Calu3 (cell line): ENCODE measurements at regions of chr6 and their contacts with region 1.

Region 1: GRCh38 chr6:166275714-166276166 is 32.5 kb downstream of the PRR18 start:
- DNase-seq: peak; percentile 89
- H3K4me3 Mint-ChIP-seq: no peak overlapping the region
- H3K27ac Mint-ChIP-seq: no peak overlapping the region
- H3K4me1 Mint-ChIP-seq: peaks cover 10% of the 10 kb centered on the region
- H3K27me3 Mint-ChIP-seq: peaks cover 38% of the 10 kb centered on the region
- CTCF ChIP-seq: peak; percentile 93

Region 2: DNA sequence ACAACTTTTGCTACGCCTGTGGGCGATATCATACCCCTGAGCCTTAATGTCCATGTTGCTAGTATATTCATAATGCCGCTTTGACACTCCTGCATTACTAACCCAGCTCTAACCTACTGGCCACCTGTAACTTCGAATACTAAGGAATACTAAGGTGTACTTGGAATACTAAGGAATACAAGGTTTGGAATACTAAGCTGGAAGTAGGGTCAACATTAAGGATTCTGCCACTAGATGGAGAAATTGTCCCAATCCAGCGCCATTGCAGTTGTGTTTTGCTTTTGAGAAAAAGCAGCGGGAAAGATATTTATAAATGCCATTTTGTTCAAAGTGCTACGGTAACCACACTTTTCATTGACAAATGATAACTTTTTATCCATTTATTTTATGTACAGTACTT is 118.8 kb before region 1 on chr6:
- CTCF ChIA-PET with region 1: interaction called, 8 read pairs
- intact Hi-C with region 1: loop called (anchors 2 kb)
- DNase-seq: no peak
- H3K4me3 Mint-ChIP-seq: no peak overlapping the region
- H3K27ac Mint-ChIP-seq: no peak overlapping the region
- H3K4me1 Mint-ChIP-seq: no peaks in the 10 kb centered on the region
- H3K27me3 Mint-ChIP-seq: peaks cover 32% of the 10 kb centered on the region
- CTCF ChIP-seq: no peak

Region 3: GRCh38 chr6:166382933-166383801 is 107.4 kb after region 1 on chr6 and contains the start of gene MPC1:
- CTCF ChIA-PET with region 1: interaction called, 6 read pairs
- intact Hi-C with region 1: loop called (anchors 5 kb)
- DNase-seq: peak; percentile 98
- H3K4me3 Mint-ChIP-seq: peak within 1 kb of the TSS; percentile 93
- H3K27ac Mint-ChIP-seq: peak within 1 kb of the TSS; percentile 74
- H3K4me1 Mint-ChIP-seq: peaks cover 14% of the 10 kb centered on the region
- H3K27me3 Mint-ChIP-seq: no peaks in the 10 kb centered on the region
- CTCF ChIP-seq: no peak
- total RNA-seq, gene MPC1: 41.5 and 48.9 TPM in 2 replicates

Region 4: GRCh38 chr6:166402582-166403277 is 127.0 kb after region 1 on chr6:
- CTCF ChIA-PET with region 1: interaction called, 12 read pairs
- intact Hi-C with region 1: loop called (anchors 1 kb)
- DNase-seq: no peak
- H3K4me3 Mint-ChIP-seq: no peak overlapping the region
- H3K27ac Mint-ChIP-seq: peak overlapping the region; percentile 27
- H3K4me1 Mint-ChIP-seq: no peaks in the 10 kb centered on the region
- H3K27me3 Mint-ChIP-seq: peaks cover 21% of the 10 kb centered on the region
- CTCF ChIP-seq: no peak